ENCODE measurements at regions of chr14 and their contacts with region 1.

Region 1: DNA sequence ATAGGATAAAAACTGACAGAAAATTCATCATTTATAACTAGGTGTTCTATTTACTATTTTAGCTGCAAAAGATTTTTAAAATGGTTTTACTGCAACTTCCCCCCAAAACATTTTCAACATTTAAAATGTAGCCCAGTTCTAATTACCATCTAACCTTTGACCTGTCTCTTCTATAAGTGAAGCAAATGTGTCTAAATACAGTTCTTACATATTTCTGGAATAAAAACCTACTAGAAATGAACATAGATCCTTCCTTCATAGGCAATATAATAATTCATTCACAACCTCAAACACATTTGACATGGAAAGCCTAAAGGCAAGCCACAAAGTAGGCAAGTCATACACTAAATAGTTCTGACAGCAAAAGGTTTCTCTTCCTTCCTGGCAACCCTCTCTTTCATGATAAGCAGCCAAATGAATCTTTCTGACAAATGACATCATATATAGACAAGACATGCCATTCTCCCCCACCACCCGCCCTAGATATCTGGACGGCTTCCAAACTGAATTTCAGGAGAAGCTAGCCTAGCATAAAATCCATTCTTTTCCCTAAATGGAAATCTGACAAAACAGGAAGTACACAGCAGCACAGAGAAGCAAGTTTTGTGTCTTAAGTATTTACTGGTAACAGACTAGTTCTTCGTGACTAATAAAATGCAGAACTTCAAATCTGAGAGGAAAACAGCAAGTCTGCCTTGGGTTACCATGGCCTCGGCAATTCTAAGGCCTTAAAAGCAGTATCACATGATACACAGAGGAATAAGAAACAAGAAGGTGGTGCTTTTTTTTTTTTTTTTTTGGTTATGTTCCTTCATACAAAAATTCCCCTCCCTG is 17.2 kb upstream of the ARID4A start:
- DNase-seq: no peak
- ATAC-seq: peak; percentile 84

Region 2: GRCh38 chr14:56617084-56617483 is 1664.1 kb before region 1 on chr14:
- intact Hi-C with region 1: loop called (anchors 5 kb)
- DNase-seq: no peak
- ATAC-seq: no peak

Region 3: DNA sequence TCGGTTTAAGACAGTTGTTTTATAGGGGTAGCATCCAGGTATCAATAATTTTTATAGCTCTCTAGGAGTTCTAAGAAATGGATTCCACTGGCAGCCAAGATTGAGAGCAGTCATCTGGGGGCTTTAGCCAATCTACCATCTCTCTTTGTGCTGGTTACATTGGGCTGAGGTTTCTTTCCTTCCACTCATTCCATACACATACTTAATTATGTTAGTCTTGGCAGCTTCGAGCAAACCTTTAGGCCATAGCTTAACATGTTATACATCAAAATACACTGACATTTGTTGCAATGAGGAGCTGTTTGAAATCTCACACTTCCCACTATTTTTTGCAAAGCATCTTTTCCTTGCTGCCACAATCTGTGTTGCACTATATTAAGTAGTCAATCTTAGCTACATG is 192.2 kb before region 1 on chr14:
- intact Hi-C with region 1: no loop called
- DNase-seq: no peak
- ATAC-seq: no peak

Region 4: DNA sequence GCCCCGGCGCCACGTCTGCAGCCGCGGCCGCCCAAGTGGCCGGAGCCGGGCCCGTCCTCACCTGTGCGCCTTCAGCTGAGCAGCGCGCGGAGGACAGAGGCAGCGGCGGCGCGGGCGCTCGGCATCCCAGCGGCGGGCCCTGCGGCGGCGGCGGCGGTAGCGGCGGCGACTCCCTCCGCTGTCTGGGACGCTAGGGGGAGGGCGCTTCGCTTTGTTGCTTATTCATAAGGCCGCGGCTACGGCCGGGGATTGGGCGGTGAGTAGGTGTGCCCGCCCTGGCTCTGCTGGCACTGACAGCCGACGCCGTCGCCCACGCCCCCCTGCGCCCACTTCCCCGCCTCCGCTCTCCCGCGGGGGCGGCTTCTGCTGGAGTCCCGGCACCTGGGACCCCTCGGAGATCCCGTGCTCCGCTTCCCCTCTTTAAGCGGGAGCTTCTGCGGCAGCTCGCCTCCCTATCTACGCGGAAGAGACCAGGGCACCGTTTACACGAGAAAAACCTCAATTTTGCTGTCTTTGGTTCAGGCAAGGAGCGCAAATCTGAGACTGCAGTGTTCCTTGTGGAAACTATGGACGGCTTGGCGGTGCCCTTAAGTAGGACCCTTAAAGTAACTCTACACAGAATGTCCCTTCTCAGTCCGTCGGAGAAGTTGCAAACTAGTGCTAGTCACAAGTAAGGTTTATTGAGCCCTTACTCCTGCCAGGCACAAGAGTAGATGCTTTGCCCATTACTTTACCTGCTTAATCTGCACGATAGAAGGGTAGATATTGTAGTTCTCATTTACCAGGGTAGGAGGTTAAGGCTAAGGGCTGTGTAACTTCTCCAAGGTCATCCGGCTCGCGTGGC is 128.9 kb before region 1 on chr14 and contains the start of gene ARMH4:
- intact Hi-C with region 1: no loop called
- DNase-seq: peak; percentile 89
- ATAC-seq: peak; percentile 97
- total RNA-seq, gene ARMH4: 11.5 TPM

Region 5: GRCh38 chr14:59547310-59547709 is 1266.1 kb after region 1 on chr14:
- intact Hi-C with region 1: no loop called
- DNase-seq: no peak
- ATAC-seq: no peak

Measured in sciatic nerve (tissue), 2 donors.